ENCODE measurements at regions of chr6 and their contacts with region 1.

Region 1: DNA sequence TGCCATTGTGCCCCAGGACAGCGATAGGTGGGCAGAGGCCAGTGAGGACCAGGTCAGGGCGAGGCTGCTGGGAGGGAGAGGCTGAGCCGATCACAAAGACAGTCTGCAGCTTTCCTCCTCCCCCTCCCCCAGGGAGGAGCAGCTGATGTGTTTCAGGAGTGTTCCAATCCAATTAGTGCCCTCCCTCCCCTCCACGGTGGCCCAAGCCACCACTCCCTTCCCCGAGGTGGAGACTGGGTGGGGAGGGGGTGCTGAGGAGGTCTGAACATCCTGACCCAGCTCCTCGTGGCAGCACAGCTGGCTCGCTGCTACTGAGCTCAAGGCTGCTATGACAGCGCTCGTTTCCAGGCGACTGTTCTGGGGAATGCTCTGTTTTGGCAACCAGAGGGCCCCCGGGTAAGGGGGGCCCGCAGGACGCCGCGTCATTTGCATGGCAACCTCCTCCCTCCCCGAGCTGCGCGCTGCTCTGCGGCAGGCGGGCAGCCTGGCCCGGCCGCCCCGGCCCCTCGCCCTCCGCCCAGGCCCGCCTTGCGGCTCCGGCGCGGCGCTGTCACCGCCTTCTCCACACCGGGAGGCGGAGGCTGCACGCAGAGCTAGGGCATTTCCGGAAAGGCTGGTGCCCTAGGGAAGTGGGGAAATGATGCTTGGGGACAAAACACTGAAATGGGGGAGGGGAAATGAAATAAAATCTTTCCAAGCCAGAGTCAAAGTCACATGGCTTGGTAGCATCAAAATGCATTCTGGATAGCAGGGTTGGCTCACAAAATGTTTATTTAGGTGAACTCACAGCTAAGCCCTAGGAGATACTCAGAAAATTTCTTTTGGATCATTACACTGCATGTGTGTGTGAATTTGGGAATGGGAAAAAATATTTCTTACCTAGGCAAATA is 67.4 kb upstream of the PIM1 start:
- DNase-seq: peak; percentile 92
- ATAC-seq: peak; percentile 80
- H3K4me3 Mint-ChIP-seq: peak overlapping the region; percentile 66
- H3K27ac Mint-ChIP-seq: peak overlapping the region; percentile 94
- H3K4me1 Mint-ChIP-seq: peaks cover 62% of the 10 kb centered on the region
- H3K27me3 Mint-ChIP-seq: no peaks in the 10 kb centered on the region; the same call in 1 of the 2 replicates
- CTCF ChIP-seq: no peak

Region 2: GRCh38 chr6:37051138-37052026 is 51.1 kb before region 1 on chr6:
- CTCF ChIA-PET with region 1: interaction called, 27 read pairs
- POLR2A ChIA-PET with region 1: interaction called, 9 read pairs
- DNase-seq: peak; percentile 94
- ATAC-seq: peak; percentile 38
- H3K4me3 Mint-ChIP-seq: peak overlapping the region; percentile 25
- H3K27ac Mint-ChIP-seq: peak overlapping the region; percentile 82
- H3K4me1 Mint-ChIP-seq: peaks cover 37% of the 10 kb centered on the region
- H3K27me3 Mint-ChIP-seq: no peaks in the 10 kb centered on the region
- CTCF ChIP-seq: peak; percentile 71

Region 3: DNA sequence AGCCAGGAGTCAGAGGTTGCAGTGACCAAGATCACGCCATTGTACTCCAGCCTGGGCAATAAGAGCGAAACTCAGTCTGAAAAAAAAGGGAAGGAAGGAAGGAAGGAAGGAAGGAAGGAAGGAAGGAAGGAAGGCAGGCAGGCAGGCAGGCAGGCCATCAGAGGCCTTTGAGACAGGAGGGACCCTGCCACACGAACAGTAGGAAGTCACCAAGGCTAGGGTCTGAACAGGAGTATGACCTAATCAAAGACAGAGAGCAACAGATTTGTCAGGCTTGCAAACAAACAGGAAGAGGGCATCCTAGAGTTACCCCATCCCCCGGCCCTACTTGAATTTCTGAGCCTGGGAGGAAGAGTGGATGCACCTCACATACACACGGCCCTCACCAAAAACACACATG is 30.0 kb before region 1 on chr6:
- CTCF ChIA-PET with region 1: interaction called, 10 read pairs
- POLR2A ChIA-PET with region 1: interaction called, 7 read pairs
- DNase-seq: no peak
- ATAC-seq: peak; percentile 9
- H3K4me3 Mint-ChIP-seq: no peak overlapping the region
- H3K27ac Mint-ChIP-seq: peak overlapping the region; percentile 93
- H3K4me1 Mint-ChIP-seq: peaks cover 47% of the 10 kb centered on the region
- H3K27me3 Mint-ChIP-seq: no peaks in the 10 kb centered on the region
- CTCF ChIP-seq: no peak

Region 4: DNA sequence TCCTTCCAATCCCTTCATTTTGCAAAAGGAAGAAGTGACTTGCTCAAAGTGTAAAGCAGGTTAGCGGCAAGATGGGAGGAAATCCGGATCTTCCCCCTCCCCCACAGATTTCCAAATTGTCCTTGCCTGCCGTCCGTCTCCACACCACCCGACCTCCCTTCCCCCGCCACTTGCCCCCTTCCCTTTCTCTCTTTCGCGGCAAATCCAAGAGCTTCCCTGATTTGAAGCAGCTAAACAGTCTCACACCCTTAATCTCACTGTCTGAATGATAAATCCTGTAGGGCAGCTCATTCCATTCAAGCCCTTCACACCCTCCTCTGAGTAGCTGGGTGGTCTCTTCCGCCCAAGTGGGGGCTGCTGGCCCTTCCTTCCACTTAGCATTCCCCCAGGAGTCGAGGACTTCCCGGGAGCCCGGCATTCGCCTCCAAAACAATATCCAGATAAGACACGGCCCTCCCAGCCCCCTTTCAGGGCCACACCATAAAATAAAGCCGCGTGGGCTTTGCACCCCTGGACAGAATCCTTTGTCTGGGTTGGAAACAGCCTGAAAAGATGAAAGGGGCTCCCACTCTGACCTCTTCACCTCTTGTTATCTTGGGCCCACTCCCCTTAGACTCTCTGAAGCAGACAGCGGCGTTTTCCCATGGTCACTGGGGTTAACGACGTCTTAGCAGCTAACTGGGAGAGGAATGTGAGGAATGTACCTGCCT is 23.4 kb after region 1 on chr6:
- CTCF ChIA-PET with region 1: interaction called, 15 read pairs
- POLR2A ChIA-PET with region 1: interaction called, 25 read pairs
- DNase-seq: peak; percentile 80
- ATAC-seq: peak; percentile 77
- H3K4me3 Mint-ChIP-seq: peak overlapping the region; percentile 73
- H3K27ac Mint-ChIP-seq: peak overlapping the region; percentile 100
- H3K4me1 Mint-ChIP-seq: peaks cover 85% of the 10 kb centered on the region
- H3K27me3 Mint-ChIP-seq: no peaks in the 10 kb centered on the region
- CTCF ChIP-seq: no peak

Region 5: GRCh38 chr6:37131104-37131959 is 28.8 kb after region 1 on chr6:
- CTCF ChIA-PET with region 1: interaction called, 15 read pairs
- POLR2A ChIA-PET with region 1: interaction called, 25 read pairs
- DNase-seq: no peak
- ATAC-seq: peak; percentile 17
- H3K4me3 Mint-ChIP-seq: no peak overlapping the region; the same call in 1 of the 2 replicates
- H3K27ac Mint-ChIP-seq: peak overlapping the region; percentile 91
- H3K4me1 Mint-ChIP-seq: peaks cover 83% of the 10 kb centered on the region
- H3K27me3 Mint-ChIP-seq: no peaks in the 10 kb centered on the region
- CTCF ChIP-seq: no peak

Region 6: DNA sequence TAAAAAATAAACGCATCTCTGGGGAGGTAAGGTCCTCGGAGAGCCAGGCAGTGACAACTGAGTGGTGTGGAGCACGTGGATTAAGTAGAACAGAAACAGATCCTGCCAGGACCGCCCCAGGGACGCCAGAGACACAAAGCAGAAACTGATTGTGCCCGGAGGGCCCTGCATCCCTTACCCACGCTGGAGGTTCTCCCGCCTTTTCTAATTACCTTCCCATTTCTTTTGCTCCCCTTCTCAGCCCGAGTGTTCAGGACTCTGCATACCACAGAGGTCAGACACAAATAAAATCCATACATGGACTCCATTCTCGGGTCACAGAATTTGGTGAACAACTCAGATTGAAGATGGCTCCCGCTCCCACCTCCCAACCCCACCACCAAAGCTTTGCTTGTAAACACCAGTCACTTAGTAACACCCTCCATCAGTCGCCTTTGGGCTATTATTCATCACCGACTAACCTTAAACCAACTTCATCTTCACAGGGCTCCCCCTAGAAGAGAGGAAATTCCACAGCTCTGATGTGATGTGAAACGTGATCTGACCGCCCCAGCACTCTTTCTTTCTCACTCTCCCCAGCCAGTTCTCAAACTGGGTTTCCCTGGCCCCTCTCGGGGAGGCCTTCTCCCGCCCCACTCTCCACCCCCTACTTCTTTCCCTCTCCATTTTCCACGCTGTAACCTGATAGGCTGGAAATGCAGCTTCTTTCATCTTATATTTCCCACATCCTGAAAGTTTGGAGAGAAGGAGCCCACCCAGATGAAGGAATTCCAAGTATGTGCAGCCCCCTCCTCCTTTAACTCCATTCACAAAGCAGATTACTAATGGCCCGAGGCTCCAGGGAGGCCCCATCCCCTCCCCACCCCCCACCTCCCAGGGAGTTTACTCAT is 34.9 kb after region 1 on chr6:
- CTCF ChIA-PET with region 1: interaction called, 8 read pairs
- POLR2A ChIA-PET with region 1: interaction called, 21 read pairs
- DNase-seq: peak; percentile 81
- ATAC-seq: peak; percentile 65
- H3K4me3 Mint-ChIP-seq: peak overlapping the region; percentile 98
- H3K27ac Mint-ChIP-seq: peak overlapping the region; percentile 100
- H3K4me1 Mint-ChIP-seq: peaks cover 75% of the 10 kb centered on the region
- H3K27me3 Mint-ChIP-seq: no peaks in the 10 kb centered on the region
- CTCF ChIP-seq: no peak

Region 7: GRCh38 chr6:37516076-37516919 is 413.8 kb after region 1 on chr6:
- CTCF ChIA-PET with region 1: no interaction called
- POLR2A ChIA-PET with region 1: no interaction called
- DNase-seq: peak; percentile 28
- ATAC-seq: peak; percentile 13
- H3K4me3 Mint-ChIP-seq: 0 out of 2 replicates have a peak overlapping the region, but pooled peaks have one; percentile 14
- H3K27ac Mint-ChIP-seq: no peak overlapping the region
- H3K4me1 Mint-ChIP-seq: peaks cover 61% of the 10 kb centered on the region
- H3K27me3 Mint-ChIP-seq: peaks cover 43% of the 10 kb centered on the region
- CTCF ChIP-seq: no peak